Caco-2 (cell line): ENCODE measurements at regions of chr14 and their contacts with region 1.

Region 1: DNA sequence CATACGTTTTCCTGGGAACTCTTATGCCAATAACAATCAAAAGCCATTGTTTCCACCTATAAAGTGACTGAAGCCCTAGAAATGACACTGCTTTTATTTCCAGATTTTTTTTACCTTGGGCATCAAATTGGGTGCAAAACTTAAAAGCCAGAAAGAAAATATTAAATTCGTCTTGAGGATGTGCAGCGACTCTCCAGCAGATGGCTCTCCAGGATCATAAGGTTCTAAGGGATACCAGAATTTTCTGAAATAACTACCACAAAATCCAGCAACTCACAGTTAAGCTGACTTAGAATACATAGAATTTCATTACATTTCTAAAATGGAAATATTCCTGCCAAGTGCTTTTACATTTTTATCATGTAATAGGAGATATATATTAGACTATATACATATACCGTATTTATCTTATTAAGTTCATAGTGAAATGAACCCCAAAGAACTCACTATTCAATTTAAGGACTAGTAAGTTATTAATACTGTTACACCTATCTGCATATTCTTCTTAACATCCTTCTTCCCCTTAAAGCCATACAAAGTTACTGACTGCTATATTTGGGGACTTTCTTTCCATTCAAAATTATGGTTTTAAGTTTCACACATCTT is 44.0 kb downstream of the ARMH4 start:
- DNase-seq: peak in 1 of 2 experiments; percentile 46
- H3K4me3 ChIP-seq: no peak overlapping the region
- H3K4me3 Mint-ChIP-seq: no peak overlapping the region
- H3K27ac Mint-ChIP-seq: no peak overlapping the region
- H3K4me1 ChIP-seq: no peaks in the 10 kb centered on the region
- H3K4me1 Mint-ChIP-seq: no peaks in the 10 kb centered on the region
- H3K27me3 ChIP-seq: no peaks in the 10 kb centered on the region
- H3K27me3 Mint-ChIP-seq: peaks cover 10% of the 10 kb centered on the region
- CTCF ChIP-seq: peak; percentile 75 to 77

Region 2: GRCh38 chr14:58152014-58152857 is 44.2 kb after region 1 on chr14 and contains the start of gene ARMH4:
- CTCF ChIA-PET with region 1: no interaction called
- POLR2A ChIA-PET with region 1: no interaction called
- intact Hi-C with region 1: loop called (anchors 5 kb)
- DNase-seq: peak; percentile 71 to 78
- H3K4me3 ChIP-seq: peak within 1 kb of the TSS; percentile 46
- H3K4me3 Mint-ChIP-seq: peak within 1 kb of the TSS; percentile 71
- H3K27ac Mint-ChIP-seq: no peak within 1 kb of the TSS
- H3K4me1 ChIP-seq: peaks cover 6% of the 10 kb centered on the region; the same call in 1 of the 2 replicates
- H3K4me1 Mint-ChIP-seq: no peaks in the 10 kb centered on the region
- H3K27me3 ChIP-seq: peaks cover 3% of the 10 kb centered on the region
- H3K27me3 Mint-ChIP-seq: peaks cover 27% of the 10 kb centered on the region
- CTCF ChIP-seq: no peak
- total RNA-seq, gene ARMH4: 0.07 and 0.16 TPM in 2 replicates

Region 3: GRCh38 chr14:58171090-58171489 is 63.0 kb after region 1 on chr14:
- CTCF ChIA-PET with region 1: interaction called, 4 read pairs
- POLR2A ChIA-PET with region 1: no interaction called
- intact Hi-C with region 1: loop called (anchors 1 kb)
- DNase-seq: peak; percentile 86 to 90
- H3K4me3 ChIP-seq: no peak overlapping the region
- H3K4me3 Mint-ChIP-seq: peak overlapping the region; percentile 9
- H3K27ac Mint-ChIP-seq: peak overlapping the region; percentile 58
- H3K4me1 ChIP-seq: 0 out of 2 replicates have a peak, but pooled peaks cover 4% of the 10 kb centered on the region
- H3K4me1 Mint-ChIP-seq: peaks cover 9% of the 10 kb centered on the region
- H3K27me3 ChIP-seq: no peaks in the 10 kb centered on the region
- H3K27me3 Mint-ChIP-seq: peaks cover 8% of the 10 kb centered on the region
- CTCF ChIP-seq: no peak

Region 4: DNA sequence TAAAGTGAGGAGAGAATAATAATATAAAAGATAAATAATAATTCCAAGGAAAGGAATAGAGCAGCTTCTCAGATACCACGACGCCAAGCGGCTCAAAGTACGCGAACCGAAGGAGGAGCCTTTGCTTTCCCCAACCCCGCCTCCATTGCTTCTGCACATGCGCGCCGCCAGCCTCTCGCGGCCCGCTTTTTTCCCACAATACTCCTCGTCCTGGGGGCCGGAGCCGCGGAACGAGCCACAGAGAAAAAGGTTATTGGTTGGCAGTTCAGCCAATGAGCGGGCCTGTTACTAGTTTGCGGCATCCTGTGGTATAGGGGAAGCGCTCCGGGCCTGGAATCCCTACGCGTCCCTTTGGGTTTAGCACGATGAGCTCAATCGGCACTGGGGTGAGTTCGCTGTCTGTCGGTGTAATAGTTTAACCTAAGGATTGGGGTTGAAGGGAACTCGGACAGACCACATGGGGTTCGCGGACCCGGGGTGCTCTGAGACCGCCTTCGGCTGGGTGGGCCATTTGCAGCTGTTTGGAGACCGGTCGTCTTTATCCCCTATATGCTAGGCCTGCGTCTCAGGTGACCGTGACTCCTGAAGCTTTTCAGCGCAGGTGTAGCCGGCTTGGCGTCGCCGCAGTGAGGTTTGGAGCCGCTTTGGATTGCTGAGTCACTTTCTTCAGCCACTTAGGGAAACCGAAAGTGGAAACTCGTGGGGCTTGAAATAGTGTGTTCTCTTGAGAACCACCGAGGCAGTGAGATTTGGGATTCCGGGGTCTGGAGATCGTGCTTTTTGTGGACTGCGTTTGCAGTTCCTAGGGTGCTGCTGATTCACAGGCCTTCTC is 136.7 kb after region 1 on chr14 and contains the start of gene PSMA3:
- CTCF ChIA-PET with region 1: no interaction called
- POLR2A ChIA-PET with region 1: no interaction called
- intact Hi-C with region 1: loop called (anchors 5 kb)
- DNase-seq: peak; percentile 97 to 98
- H3K4me3 ChIP-seq: peak within 1 kb of the TSS; percentile 96
- H3K4me3 Mint-ChIP-seq: peak within 1 kb of the TSS; percentile 96
- H3K27ac Mint-ChIP-seq: peak within 1 kb of the TSS; percentile 99
- H3K4me1 ChIP-seq: peaks cover 21% of the 10 kb centered on the region; the same call in 1 of the 2 replicates
- H3K4me1 Mint-ChIP-seq: peaks cover 9% of the 10 kb centered on the region
- H3K27me3 ChIP-seq: no peaks in the 10 kb centered on the region
- H3K27me3 Mint-ChIP-seq: no peaks in the 10 kb centered on the region
- CTCF ChIP-seq: no peak
- total RNA-seq, gene PSMA3: 334 and 352 TPM in 2 replicates

Region 5: DNA sequence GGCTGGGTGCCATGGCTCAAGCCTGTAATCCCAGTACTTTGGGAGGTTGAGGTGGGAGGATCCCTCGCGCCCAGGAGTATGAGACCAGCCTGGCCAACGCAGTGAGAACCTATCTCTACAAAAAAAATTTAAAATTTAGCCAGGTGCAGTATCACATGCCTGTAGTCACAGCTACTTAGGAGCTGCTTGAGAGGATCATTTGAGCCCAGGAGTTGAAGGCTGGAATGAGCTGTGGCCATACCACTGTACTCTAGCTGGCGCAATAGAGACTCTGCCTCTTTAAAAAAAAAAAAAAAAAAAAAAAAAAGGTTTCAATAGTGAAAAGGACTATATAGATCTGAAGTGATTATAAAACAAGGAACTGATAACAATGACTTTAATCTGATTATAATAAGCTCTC is 150.1 kb after region 1 on chr14:
- CTCF ChIA-PET with region 1: no interaction called
- POLR2A ChIA-PET with region 1: no interaction called
- intact Hi-C with region 1: loop called (anchors 2 kb)
- DNase-seq: no peak
- H3K4me3 ChIP-seq: no peak overlapping the region
- H3K4me3 Mint-ChIP-seq: no peak overlapping the region
- H3K27ac Mint-ChIP-seq: no peak overlapping the region
- H3K4me1 ChIP-seq: no peaks in the 10 kb centered on the region
- H3K4me1 Mint-ChIP-seq: no peaks in the 10 kb centered on the region
- H3K27me3 ChIP-seq: no peaks in the 10 kb centered on the region
- H3K27me3 Mint-ChIP-seq: no peaks in the 10 kb centered on the region
- CTCF ChIP-seq: peak in 1 of 2 experiments; percentile 12

Region 6: DNA sequence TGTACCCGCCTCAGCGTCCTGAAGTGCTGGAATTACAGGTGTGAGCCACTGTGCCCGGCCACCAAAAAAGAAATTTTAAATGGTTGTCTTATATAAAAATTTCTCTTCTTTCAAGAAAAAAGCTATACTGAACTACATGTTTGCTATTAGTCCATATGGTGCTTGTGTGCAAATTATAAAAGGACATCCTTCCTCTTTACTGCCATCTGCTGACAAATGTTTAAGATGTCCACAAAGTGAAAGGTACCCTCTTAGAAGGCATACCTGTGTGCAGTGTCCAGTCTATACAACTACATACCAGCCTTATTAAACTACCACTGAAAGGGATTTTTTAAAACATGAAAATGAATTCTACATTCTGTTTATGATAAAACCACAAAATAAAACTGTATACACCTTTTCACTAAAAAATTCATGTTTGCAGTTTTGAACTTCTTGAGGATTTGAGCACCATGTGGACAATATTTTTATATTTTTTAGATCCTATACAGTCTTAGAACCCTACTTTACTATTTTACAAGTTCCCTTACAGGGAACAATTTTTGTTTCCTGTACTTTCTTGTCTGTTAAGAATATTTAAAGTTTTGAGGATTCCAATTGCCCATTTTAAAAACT is 254.9 kb after region 1 on chr14:
- CTCF ChIA-PET with region 1: no interaction called
- POLR2A ChIA-PET with region 1: no interaction called
- intact Hi-C with region 1: loop called (anchors 2 kb)
- DNase-seq: peak in 1 of 2 experiments; percentile 21
- H3K4me3 ChIP-seq: no peak overlapping the region
- H3K4me3 Mint-ChIP-seq: no peak overlapping the region
- H3K27ac Mint-ChIP-seq: no peak overlapping the region
- H3K4me1 ChIP-seq: no peaks in the 10 kb centered on the region
- H3K4me1 Mint-ChIP-seq: no peaks in the 10 kb centered on the region
- H3K27me3 ChIP-seq: no peaks in the 10 kb centered on the region
- H3K27me3 Mint-ChIP-seq: no peaks in the 10 kb centered on the region
- CTCF ChIP-seq: peak; percentile 38 to 42